H1 (cell line): ENCODE measurements at regions of chr2 and their contacts with region 1.

Region 1: DNA sequence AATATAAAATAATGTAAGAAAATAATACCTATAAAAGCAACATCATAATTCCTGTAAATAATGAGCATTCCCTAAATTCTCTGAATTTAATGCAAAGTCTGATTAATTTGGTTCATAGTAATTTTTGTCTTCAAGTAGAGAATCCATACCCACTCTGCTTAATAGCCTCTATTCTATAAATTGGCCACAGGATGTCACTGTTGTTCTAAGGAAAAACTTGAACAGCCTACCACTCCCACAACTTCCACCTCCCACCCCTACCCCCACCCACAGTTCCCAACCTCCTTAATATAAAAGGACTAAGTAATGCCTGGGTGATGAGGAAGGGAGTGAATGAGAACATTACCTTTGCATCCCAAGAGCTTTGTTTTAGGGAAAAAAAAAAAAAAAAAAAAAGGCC is 27.2 kb upstream of the BBS5 start:
- DNase-seq: no peak
- H3K4me3 ChIP-seq: no peak overlapping the region
- H3K27ac ChIP-seq: no peak overlapping the region
- H3K4me1 ChIP-seq: no peaks in the 10 kb centered on the region
- H3K27me3 ChIP-seq: no peaks in the 10 kb centered on the region
- CTCF ChIP-seq: peak in 2 of 3 experiments; percentile 23 to 28; a peak in 2 of 4 replicates
- EP300 ChIP-seq: no peak
- POLR2A ChIP-seq: no peak
- RAD21 ChIP-seq: peak; percentile 67 to 68

Region 2: DNA sequence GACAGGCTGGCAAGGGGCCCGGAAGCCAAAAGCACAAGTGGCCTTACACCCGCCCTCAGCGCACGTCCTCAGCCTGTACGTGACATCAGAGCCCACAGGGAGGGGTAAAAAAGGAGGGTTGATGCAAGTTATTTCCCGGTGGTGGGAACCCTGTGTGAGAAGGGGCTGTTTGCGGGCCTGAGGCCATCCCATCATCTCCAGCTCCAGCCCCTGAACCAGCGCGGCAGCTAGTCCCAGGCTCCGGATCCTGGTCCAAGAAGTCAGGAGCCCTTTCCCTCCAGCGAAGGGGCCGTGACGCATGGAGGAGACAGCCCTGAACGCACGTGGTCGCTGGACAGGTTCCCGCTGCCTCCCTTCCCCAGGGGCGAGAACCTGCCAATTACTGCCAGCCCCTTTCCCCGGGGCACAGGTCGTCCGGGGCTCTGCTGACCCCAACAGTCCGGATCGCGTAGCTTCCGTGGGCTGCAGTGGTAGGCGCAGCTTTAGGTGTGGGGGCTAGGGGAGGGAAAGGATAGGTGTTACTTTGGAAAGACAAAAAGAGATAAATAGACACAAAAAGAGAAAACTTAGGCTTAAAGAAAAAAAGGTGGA is 88.4 kb before region 1 on chr2:
- CTCF ChIA-PET with region 1: no interaction called
- POLR2A ChIA-PET with region 1: no interaction called
- DNase-seq: peak in 1 of 2 experiments; percentile 70
- H3K4me3 ChIP-seq: peak overlapping the region; percentile 42 to 65 (median 53)
- H3K27ac ChIP-seq: no peak overlapping the region
- H3K4me1 ChIP-seq: peaks cover 0 to 22% (median 13%) of the 10 kb centered on the region in 4 experiments; a peak in 6 of 7 replicates
- H3K27me3 ChIP-seq: peaks cover 18 to 42% (median 37%) of the 10 kb centered on the region in 4 experiments
- CTCF ChIP-seq: no peak
- EP300 ChIP-seq: no peak
- POLR2A ChIP-seq: no peak
- RAD21 ChIP-seq: peak in 1 of 2 experiments; percentile 40; a peak in 2 of 4 replicates

Region 3: GRCh38 chr2:169438460-169439072 is 13.5 kb before region 1 on chr2:
- CTCF ChIA-PET with region 1: interaction called, 13 read pairs
- POLR2A ChIA-PET with region 1: no interaction called
- DNase-seq: no peak
- H3K4me3 ChIP-seq: no peak overlapping the region
- H3K27ac ChIP-seq: no peak overlapping the region
- H3K4me1 ChIP-seq: no peaks in the 10 kb centered on the region
- H3K27me3 ChIP-seq: no peaks in the 10 kb centered on the region
- CTCF ChIP-seq: no peak
- EP300 ChIP-seq: no peak
- POLR2A ChIP-seq: no peak
- RAD21 ChIP-seq: no peak

Region 4: DNA sequence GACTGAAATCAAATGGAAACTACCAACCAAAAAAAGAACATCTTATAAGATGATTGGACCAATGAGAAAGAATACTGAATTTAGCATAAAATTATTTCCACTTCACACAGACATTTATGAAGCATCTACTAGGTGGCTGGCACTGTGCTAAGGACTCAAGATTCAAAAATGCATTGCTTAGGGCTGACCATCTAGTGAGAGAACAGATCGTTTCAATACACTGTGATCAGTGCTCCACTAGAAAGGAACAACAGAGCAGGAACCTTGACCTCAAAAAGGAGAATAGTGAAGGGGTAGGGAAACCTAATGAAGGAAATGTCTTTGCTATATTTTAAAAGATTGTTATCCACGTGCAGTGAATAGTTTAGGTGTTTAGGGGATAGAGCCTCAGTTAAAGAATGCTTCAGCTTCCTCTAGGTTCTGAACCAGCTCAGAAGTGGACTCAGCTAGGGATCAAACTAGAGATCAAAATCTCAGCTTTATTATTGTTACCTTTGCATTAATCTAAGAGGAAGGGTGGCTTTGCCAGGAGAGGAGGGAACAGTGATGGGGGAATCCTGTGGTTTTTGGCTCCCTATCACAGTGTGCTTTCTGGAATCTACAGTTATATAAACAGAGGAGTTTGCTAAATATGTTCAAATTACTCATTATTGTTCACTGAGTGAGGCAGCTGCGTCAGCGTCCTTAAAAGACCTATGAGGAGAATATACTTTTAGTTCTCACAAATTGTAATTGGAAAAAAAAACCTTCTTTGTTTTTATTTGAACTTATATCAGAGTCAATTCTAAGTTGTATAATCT is 11.0 kb after region 1 on chr2:
- CTCF ChIA-PET with region 1: interaction called, 14 read pairs
- POLR2A ChIA-PET with region 1: no interaction called
- DNase-seq: no peak
- H3K4me3 ChIP-seq: no peak overlapping the region
- H3K27ac ChIP-seq: no peak overlapping the region
- H3K4me1 ChIP-seq: no peaks in the 10 kb centered on the region
- H3K27me3 ChIP-seq: no peaks in the 10 kb centered on the region
- CTCF ChIP-seq: no peak
- EP300 ChIP-seq: no peak
- POLR2A ChIP-seq: no peak
- RAD21 ChIP-seq: no peak

Region 5: GRCh38 chr2:169562519-169562918 is 110.4 kb after region 1 on chr2:
- CTCF ChIA-PET with region 1: no interaction called
- POLR2A ChIA-PET with region 1: no interaction called
- DNase-seq: no peak
- H3K4me3 ChIP-seq: no peak overlapping the region
- H3K27ac ChIP-seq: no peak overlapping the region
- H3K4me1 ChIP-seq: no peaks in the 10 kb centered on the region
- H3K27me3 ChIP-seq: no peaks in the 10 kb centered on the region
- CTCF ChIP-seq: no peak
- EP300 ChIP-seq: no peak
- POLR2A ChIP-seq: no peak
- RAD21 ChIP-seq: no peak